Activated CD4-positive, alpha-beta T cell treated with anti-CD3 and anti-CD28 coated beads for 36 hours (primary cell): ENCODE measurements at regions of chr19 and their contacts with region 1.

Region 1: GRCh38 chr19:46704379-46705076 is 12.4 kb downstream of the PRKD2 start:
- DNase-seq: peak; percentile 93
- ATAC-seq: peak; percentile 90
- H3K4me3 Mint-ChIP-seq: no peak overlapping the region
- H3K27ac Mint-ChIP-seq: peak overlapping the region; percentile 67
- H3K4me1 Mint-ChIP-seq: peaks cover 6% of the 10 kb centered on the region
- H3K27me3 Mint-ChIP-seq: no peaks in the 10 kb centered on the region

Region 2: GRCh38 chr19:46607448-46607841 is 97.1 kb before region 1 on chr19:
- CTCF ChIA-PET with region 1: interaction called, 4 read pairs
- POLR2A ChIA-PET with region 1: interaction called, 14 read pairs
- intact Hi-C with region 1: no loop called
- DNase-seq: no peak
- ATAC-seq: no peak
- H3K4me3 Mint-ChIP-seq: no peak overlapping the region
- H3K27ac Mint-ChIP-seq: no peak overlapping the region
- H3K4me1 Mint-ChIP-seq: peaks cover 67% of the 10 kb centered on the region
- H3K27me3 Mint-ChIP-seq: no peaks in the 10 kb centered on the region

Region 3: DNA sequence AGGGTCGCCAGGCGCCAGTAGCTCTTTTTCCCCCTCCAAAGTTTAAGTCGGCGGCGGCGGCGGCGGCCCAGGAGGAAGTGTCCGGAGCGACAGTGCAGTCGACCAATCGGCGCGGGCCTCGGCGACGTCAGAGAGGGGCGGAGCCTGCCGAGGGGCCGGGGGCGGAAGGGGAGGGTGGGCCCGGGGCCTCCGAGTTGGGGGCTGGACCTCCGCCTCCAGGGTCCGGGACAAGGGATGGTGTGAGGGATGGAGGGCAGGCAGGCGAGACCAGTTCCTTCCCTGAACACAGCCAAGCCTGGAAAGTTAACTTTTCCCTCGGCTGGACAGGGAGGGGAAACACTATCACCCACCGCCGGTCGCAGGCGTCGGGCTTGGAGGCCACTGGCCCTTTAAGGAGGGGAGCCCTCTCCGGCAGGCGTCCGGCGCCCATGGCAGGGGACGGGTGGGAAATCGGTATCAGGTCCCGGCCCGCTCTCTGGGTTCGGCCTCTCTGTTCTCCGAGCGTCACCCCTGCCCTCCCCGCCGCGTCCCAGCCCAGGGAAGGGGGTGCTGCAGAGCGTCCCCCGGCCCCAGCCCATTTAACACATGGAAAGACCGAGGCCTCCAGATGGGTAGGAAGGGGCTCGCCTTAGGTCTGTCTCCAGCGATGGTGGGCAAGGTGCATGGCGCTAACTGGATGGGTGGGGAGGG is 12.7 kb after region 1 on chr19 and contains the start of gene PRKD2:
- CTCF ChIA-PET with region 1: interaction called, 21 read pairs
- POLR2A ChIA-PET with region 1: no interaction called
- intact Hi-C with region 1: no loop called
- DNase-seq: peak; percentile 95
- ATAC-seq: peak; percentile 66
- H3K4me3 Mint-ChIP-seq: peak within 1 kb of the TSS; percentile 94
- H3K27ac Mint-ChIP-seq: peak within 1 kb of the TSS; percentile 95
- H3K4me1 Mint-ChIP-seq: peaks cover 40% of the 10 kb centered on the region
- H3K27me3 Mint-ChIP-seq: no peaks in the 10 kb centered on the region
- total RNA-seq, gene PRKD2: 76.0 to 78.3 TPM